GM13977 (cell line): ENCODE measurements at regions of chr17 and their contacts with region 1.

Region 1: DNA sequence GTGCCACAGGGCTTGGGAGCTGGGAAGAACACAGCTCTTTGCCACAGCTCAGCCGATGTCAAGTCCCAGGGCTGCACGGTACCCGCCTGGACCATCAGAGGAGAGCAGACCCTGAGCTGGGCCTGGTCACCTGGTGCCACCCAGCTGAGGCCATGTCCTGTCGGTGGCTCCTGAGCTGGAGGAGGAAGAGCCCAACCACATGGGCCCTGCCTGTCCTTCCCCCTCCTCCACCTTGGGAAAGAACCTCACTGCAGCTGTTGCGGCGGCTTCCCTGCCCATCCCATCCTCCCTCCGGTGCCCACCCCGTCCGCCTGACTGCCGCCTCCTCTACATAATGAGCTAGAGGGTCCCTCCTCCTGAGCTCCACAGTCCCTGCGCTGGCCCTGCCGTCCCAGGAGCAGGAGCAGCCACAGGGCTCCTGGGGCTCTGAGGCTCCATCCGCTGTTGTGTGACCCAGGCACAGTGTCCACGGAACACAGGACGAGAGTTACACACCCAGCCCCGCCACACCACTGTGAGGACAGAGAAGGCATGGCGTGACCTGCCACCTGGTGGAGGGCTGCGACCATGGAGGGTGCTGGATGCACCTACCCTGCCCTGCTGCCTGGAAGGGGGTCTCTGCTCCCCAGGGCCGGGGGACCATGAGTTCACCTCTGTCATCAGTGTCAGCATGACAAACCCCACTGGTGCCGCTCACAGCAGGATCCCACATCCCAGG is 21.4 kb upstream of the CHMP6 start:
- DNase-seq: peak; percentile 87
- CTCF ChIP-seq: peak; percentile 62

Region 2: DNA sequence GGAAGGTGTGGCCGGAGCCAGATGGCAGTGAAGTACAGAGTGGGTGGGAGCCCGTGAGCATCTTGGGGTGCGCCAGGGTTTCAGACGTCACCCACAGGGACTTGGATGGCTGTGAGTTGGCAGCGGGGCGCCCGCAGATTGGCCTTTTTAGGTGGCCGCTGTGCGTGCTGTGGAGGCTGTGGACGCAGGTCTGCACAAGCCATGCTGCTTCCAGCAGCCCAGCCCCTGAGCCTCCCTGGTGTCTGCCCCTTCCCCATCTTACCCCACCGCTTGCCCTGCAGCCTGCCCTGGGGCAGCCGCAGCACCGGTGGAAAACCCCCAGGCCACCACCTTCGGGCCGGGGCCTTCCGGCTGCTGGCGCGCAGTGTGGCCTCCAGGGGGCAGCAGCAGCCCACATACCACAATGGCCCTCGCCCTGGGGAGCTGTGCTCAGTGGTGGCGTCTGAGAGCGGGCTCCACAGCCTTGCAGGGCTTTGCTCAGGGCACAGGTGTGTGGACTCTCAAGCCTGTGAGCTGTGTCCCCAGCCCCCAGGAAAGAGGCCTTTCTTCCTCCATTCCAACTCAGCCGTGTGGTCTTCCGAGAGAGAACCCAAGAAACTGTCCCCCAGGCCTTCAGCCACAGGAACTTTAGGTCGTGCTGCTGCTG is 543.4 kb before region 1 on chr17:
- in situ Hi-C with region 1: loop called (anchors 5 kb)
- DNase-seq: peak; percentile 97
- CTCF ChIP-seq: peak; percentile 99

Region 3: GRCh38 chr17:80559825-80560251 is 410.4 kb before region 1 on chr17:
- in situ Hi-C with region 1: loop called (anchors 25 kb)
- DNase-seq: no peak
- CTCF ChIP-seq: no peak

Region 4: GRCh38 chr17:81222906-81223761 is 252.9 kb after region 1 on chr17 and contains the start of gene CEP131:
- in situ Hi-C with region 1: no loop called
- DNase-seq: peak; percentile 100
- CTCF ChIP-seq: no peak